Endothelial cell of umbilical vein (primary cell): ENCODE measurements at regions of chr12 and their contacts with region 1.

Region 1: DNA sequence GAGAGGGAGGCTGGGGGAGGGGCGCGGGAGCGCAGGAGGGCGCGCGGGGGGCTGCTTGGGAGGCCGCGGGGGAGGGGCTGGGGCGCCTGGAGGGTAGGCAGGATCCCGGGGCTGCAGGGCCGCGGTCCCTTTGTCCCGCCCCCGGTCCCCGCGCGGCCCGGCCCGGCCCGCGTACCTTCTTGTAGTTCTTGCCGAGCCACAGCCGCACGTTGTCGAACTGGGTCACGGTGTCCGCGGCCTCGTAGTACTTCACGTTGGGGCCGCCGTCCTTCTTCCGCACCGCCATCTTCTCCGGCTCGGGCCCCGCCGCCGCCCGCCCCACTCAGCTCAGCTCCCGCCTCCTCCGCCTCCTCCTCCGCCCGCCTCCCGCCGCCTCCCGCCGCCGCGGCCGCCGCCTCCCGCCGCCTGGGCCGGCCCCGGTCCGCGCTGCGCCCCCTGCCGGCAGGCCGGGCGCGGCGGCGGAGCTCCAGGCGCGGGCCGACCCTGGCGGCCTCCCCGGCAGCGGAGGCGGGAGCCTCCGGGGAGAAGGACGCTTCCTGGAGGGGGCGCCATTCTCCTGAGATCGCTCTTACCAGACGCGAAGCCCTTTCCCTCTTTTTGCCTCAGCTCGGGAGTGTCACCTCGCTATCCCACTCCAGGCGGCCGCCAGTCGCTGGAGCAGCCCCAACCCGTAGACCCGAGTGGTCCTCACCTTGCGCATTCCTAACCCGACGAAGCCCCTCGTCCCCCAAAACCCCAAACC is at the start of gene SMARCC2:
- DNase-seq: peak; percentile 88
- H3K4me3 ChIP-seq: peak within 1 kb of the TSS; percentile 70 to 95 (median 89)
- H3K27ac ChIP-seq: peak within 1 kb of the TSS; percentile 24
- H3K4me1 ChIP-seq: peaks cover 20% of the 10 kb centered on the region
- H3K27me3 ChIP-seq: no peaks in the 10 kb centered on the region
- CTCF ChIP-seq: peak; percentile 75 to 82
- POLR2A ChIP-seq: peak; percentile 41
- total RNA-seq, gene SMARCC2: 117 and 121 TPM in 2 replicates

Region 2: GRCh38 chr12:56084958-56085543 is 104.3 kb before region 1 on chr12:
- CTCF ChIA-PET with region 1: interaction called, 10 read pairs
- POLR2A ChIA-PET with region 1: no interaction called
- dilution Hi-C with region 1: no loop called
- intact Hi-C with region 1: no loop called
- DNase-seq: peak; percentile 20
- H3K4me3 ChIP-seq: no peak overlapping the region
- H3K27ac ChIP-seq: no peak overlapping the region
- H3K4me1 ChIP-seq: peaks cover 16% of the 10 kb centered on the region
- H3K27me3 ChIP-seq: peaks cover 4 to 8% of the 10 kb centered on the region in 2 experiments
- CTCF ChIP-seq: peak; percentile 40 to 58
- POLR2A ChIP-seq: no peak

Region 3: DNA sequence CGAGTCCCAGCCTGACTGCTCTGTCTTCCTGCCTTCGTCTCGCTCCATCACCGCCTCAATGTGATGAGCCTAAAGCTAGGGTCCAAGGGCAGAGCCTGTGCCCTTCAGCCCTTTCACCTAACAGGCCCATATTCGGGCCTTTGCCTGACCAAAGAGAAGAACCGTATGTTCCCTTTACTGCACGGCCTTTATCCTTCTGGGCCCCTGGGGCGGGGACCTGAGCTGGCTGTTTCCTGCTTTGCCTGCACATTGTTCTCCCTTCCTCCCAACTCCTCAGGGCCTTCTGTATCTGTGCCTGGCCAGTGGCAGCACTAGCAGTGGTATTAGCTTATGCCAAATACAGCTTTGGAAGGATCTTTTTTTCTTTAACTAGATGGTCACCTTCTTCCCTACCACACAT is 45.5 kb before region 1 on chr12:
- CTCF ChIA-PET with region 1: interaction called, 18 read pairs
- POLR2A ChIA-PET with region 1: no interaction called
- dilution Hi-C with region 1: no loop called
- intact Hi-C with region 1: no loop called
- DNase-seq: peak; percentile 66
- H3K4me3 ChIP-seq: no peak overlapping the region
- H3K27ac ChIP-seq: peak overlapping the region; percentile 27
- H3K4me1 ChIP-seq: peaks cover 29% of the 10 kb centered on the region
- H3K27me3 ChIP-seq: no peaks in the 10 kb centered on the region
- CTCF ChIP-seq: no peak
- POLR2A ChIP-seq: no peak

Region 4: DNA sequence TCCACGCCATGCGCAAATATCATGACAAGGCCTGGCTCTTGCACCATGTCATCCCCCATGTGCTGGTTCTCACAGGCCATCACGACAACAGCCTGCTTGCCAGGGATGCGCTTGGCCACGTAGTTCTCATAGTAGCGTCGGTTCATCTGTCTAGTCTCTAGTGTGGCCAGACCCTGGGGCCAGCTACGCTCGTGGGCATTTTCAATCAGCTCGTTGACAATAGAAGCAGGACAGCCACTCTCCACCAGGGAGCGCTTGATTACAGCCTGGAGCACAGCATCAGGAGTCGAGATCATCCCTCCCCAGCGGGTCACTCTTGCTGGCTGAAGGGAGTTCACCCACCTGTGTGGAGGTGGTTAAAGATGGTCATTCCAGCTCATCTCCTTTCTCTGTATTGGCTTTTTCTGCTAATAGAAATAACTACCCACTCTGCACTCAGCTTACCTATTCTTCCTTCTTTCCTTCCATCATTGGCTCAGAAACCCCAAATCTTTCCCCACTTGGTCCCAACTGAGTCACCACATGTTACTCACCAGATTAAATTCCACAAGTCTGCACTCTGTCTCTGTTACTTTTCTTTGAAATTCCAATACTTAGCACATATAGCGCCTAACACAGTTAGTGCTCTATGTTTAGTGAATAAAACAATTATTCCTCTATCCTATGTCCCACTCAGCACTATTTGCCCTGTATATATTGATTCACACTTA is 17.3 kb after region 1 on chr12:
- CTCF ChIA-PET with region 1: interaction called, 54 read pairs
- POLR2A ChIA-PET with region 1: no interaction called
- dilution Hi-C with region 1: no loop called
- intact Hi-C with region 1: no loop called
- DNase-seq: peak; percentile 52
- H3K4me3 ChIP-seq: no peak overlapping the region
- H3K27ac ChIP-seq: no peak overlapping the region
- H3K4me1 ChIP-seq: peaks cover 17% of the 10 kb centered on the region
- H3K27me3 ChIP-seq: no peaks in the 10 kb centered on the region
- CTCF ChIP-seq: peak; percentile 63 to 73
- POLR2A ChIP-seq: peak; percentile 30

Region 5: GRCh38 chr12:56266693-56267442 is 77.5 kb after region 1 on chr12 and contains the start of gene COQ10A:
- CTCF ChIA-PET with region 1: interaction called, 10 read pairs
- POLR2A ChIA-PET with region 1: no interaction called
- dilution Hi-C with region 1: no loop called
- intact Hi-C with region 1: loop called (anchors 1 kb)
- DNase-seq: peak; percentile 86
- H3K4me3 ChIP-seq: peak within 1 kb of the TSS; percentile 25 to 50 (median 43)
- H3K27ac ChIP-seq: peak within 1 kb of the TSS; percentile 61
- H3K4me1 ChIP-seq: peaks cover 4% of the 10 kb centered on the region
- H3K27me3 ChIP-seq: no peaks in the 10 kb centered on the region
- CTCF ChIP-seq: peak; percentile 24 to 60
- POLR2A ChIP-seq: peak; percentile 90
- total RNA-seq, gene COQ10A: 14.7 and 15.3 TPM in 2 replicates

Region 6: GRCh38 chr12:56661560-56661959 is 472.2 kb after region 1 on chr12:
- CTCF ChIA-PET with region 1: no interaction called
- POLR2A ChIA-PET with region 1: no interaction called
- dilution Hi-C with region 1: no loop called
- intact Hi-C with region 1: no loop called
- DNase-seq: no peak
- H3K4me3 ChIP-seq: no peak overlapping the region
- H3K27ac ChIP-seq: no peak overlapping the region
- H3K4me1 ChIP-seq: no peaks in the 10 kb centered on the region
- H3K27me3 ChIP-seq: no peaks in the 10 kb centered on the region
- CTCF ChIP-seq: no peak
- POLR2A ChIP-seq: no peak